A549 (cell line): ENCODE measurements at regions of chr2 and their contacts with region 1.

Region 1: GRCh38 chr2:222707689-222708525 is 36.4 kb downstream of the MOGAT1 start:
- DNase-seq: peak; percentile 25 to 78
- ATAC-seq: peak in 1 of 2 experiments; percentile 64; a peak in 3 of 6 replicates
- H3K4me3 ChIP-seq: no peak overlapping the region
- H3K27ac ChIP-seq: peak overlapping the region; percentile 41 to 64; a peak in 4 of 6 replicates
- H3K4me1 ChIP-seq: peaks cover 15% of the 10 kb centered on the region; the same call in 2 of the 3 replicates
- CTCF ChIP-seq: peak; percentile 89
- EP300 ChIP-seq: no peak
- POLR2A ChIP-seq: no peak
- RAD21 ChIP-seq: peak; percentile 84 to 90

Region 2: DNA sequence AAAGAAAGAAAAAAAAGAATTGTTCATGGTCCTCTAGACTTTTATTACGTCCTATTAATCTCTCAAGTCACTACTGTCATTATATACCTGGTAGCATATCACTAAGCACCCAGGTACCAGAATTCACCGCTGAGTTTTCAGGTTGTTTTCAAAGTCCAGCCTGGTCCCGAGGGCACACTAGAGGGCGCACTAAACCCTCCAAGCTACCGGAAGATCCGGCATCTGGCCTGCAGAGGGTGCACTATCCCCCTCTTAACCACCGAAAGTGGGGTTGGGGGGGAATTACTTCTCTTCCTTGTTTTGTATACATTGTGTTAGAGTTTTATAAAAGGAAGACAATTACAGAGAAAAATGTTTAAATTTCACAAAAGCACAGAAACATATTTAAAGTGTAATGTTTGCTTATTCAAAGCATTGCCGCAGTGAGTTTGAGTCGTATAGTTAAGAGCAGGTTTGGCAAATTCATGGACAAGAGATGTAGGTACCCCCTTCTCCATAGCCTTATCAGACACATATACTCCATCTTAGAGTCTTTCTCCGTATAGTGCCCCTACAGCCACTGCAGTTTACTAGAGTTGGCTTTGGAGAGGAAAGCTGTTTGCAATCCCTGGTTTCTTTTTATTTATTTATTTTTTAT is 17.2 kb before region 1 on chr2:
- CTCF ChIA-PET with region 1: interaction called, 47 read pairs
- POLR2A ChIA-PET with region 1: no interaction called
- DNase-seq: peak; percentile 83 to 87
- ATAC-seq: peak; percentile 85 to 96
- H3K4me3 ChIP-seq: peak overlapping the region; percentile 27; the same call in 1 of the 3 replicates
- H3K27ac ChIP-seq: peak overlapping the region; percentile 33 to 54; a peak in 1 of 6 replicates
- H3K4me1 ChIP-seq: no peaks in the 10 kb centered on the region
- CTCF ChIP-seq: peak; percentile 100
- EP300 ChIP-seq: no peak
- POLR2A ChIP-seq: no peak
- RAD21 ChIP-seq: peak; percentile 87 to 88

Region 3: GRCh38 chr2:222797261-222797660 is 89.4 kb after region 1 on chr2:
- CTCF ChIA-PET with region 1: interaction called, 24 read pairs
- POLR2A ChIA-PET with region 1: no interaction called
- DNase-seq: peak; percentile 32 to 45
- ATAC-seq: peak; percentile 60 to 66; a peak in 3 of 6 replicates
- H3K4me3 ChIP-seq: no peak overlapping the region
- H3K27ac ChIP-seq: peak overlapping the region; percentile 52 to 72; a peak in 5 of 6 replicates
- H3K4me1 ChIP-seq: peaks cover 28% of the 10 kb centered on the region
- CTCF ChIP-seq: peak; percentile 53
- EP300 ChIP-seq: no peak
- POLR2A ChIP-seq: no peak
- RAD21 ChIP-seq: peak; percentile 50 to 52; a peak in 4 of 5 replicates

Region 4: DNA sequence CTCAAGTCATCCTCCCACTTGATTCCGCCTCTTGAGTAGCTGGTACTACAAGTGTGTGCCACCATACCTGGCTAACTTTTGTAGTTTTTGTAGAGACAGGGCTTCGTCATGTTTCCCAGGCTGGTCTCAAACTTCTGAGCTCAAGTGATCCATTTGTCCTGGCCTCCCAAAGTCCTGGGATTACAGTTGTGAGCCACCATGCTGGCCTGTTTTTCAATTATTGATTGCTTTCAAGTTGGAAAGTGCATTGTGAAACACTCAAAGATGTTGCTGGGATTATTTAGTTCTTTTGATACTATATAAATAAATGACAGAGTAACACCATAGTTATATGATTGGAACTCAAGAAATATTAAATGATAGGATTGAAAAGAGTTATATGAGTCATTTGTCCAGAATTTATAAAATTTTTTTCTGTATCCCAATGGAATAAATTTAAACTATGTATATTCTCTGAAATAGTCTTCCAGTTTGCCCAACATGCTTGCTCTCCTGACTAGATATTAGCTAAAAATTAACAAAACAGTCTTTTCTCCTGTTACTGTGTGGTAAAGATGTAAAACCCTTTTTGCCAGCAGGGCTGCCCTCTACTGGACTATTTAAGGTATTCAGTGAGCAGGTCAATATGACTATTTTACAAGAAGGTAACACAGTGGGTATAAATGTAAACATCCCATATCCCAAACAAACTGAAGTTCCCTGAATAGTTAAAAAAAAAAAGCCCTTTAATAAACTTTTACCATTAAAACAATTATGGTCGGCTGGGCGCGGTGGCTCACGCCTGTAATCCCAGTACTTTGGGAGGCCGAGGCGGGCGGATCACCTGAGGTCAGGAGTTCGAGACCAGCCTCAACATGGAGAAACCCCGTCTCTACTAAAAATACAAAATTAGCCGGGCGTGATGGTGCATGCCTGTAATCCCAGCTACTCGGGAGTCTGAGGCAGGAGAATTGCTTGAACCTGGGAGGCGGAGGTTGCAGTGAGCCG is 195.6 kb after region 1 on chr2:
- CTCF ChIA-PET with region 1: interaction called, 71 read pairs
- POLR2A ChIA-PET with region 1: no interaction called
- DNase-seq: peak; percentile 52 to 72
- ATAC-seq: peak; percentile 69 to 83
- H3K4me3 ChIP-seq: no peak overlapping the region
- H3K27ac ChIP-seq: peak overlapping the region; percentile 13 to 61; a peak in 4 of 6 replicates
- H3K4me1 ChIP-seq: peaks cover 63% of the 10 kb centered on the region
- CTCF ChIP-seq: peak; percentile 78
- EP300 ChIP-seq: no peak
- POLR2A ChIP-seq: no peak
- RAD21 ChIP-seq: peak; percentile 82 to 86

Region 5: DNA sequence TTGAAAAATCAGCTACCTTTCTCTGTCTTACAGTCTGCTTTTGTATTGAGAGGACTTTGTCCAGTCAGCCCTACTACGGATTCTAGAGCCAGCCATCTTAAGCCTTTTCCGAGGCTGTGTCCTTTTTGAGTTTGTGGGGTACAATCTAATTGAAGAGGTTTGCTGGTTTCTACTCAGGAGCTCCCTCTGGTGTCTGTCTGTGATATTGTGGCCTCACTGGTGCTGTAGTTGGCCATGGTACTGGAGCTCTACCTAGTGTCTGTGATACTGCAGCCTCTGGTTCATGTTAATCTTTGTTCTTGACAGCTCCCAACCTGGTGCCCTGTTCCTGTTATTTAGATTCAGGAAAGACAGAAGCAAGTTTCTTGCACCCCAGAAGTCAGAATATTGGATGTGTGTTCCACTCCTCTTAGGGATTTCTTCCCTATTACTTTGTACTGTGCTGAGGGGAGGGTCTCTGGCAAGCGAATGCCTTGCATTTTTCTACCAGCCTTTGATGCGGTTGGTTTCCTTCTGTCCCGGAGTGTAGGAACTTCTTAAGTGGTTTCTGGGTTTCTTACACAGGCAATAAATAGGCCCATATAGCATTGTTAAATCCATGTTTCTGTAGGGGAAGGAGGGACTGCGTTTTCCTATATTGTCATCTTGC is 231.4 kb after region 1 on chr2:
- CTCF ChIA-PET with region 1: interaction called, 13 read pairs
- POLR2A ChIA-PET with region 1: no interaction called
- DNase-seq: peak in 1 of 2 experiments; percentile 72
- ATAC-seq: peak; percentile 89 to 94
- H3K4me3 ChIP-seq: no peak overlapping the region
- H3K27ac ChIP-seq: no peak overlapping the region
- H3K4me1 ChIP-seq: peaks cover 21% of the 10 kb centered on the region; the same call in 2 of the 3 replicates
- CTCF ChIP-seq: peak; percentile 72
- EP300 ChIP-seq: no peak
- POLR2A ChIP-seq: no peak
- RAD21 ChIP-seq: peak; percentile 62 to 74